ENCODE measurements at regions of chr20 and their contacts with region 1.

Region 1: DNA sequence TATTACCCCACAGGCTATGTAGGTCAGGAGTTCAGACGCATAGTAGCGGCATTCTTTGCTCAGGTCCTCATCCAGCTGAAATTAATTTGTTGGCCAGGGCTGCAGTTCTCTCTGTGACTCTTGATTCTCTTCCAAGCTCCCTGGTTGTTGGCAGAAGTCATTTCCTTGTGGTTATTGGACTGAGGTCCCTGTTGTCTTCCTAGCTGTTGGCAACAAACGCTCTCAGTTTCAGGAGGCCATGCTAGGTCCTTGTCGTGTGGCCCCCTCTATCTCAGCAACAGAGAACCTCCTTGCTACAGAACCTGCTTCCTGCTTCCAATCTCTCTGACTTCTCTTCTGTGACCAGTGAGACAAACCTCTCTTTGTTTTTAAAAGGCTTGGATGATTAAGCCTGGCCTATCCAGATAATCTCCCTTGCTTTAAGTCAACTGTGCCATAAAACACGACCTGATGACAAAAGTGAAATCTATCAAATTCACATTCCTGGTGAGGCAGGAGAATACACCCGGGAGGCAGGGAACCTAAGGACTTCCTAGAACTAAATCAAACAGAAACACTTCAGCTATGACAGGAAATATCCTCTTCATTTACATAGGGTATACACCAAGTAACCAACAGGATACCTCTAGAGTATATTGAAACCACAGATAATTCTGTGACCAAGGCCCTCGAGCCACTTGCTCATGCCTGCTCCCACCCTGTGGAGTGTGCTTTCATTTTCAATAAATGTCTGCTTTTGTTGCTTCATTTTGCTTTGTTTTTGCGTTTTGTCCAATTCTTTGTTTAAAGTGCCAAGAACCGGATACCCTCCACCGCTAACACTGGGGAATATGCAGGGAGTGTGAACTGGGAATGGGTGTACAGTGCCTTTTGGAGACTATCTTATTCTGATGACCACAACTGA is 196.0 kb downstream of the BTBD3 start:
- DNase-seq: peak in 2 of 10 donors; percentile 31 to 72
- H3K4me3 ChIP-seq: peak overlapping the region in 3 of 59 donors; percentile 9 to 21 (median 18)
- H3K27ac ChIP-seq: peak overlapping the region in 14 of 59 donors; percentile 26 to 66 (median 36)
- H3K27me3 ChIP-seq: no peaks in the 10 kb centered on the region
- CTCF ChIP-seq: peak in 4 of 56 donors; percentile 11 to 30 (median 14)

Region 2: DNA sequence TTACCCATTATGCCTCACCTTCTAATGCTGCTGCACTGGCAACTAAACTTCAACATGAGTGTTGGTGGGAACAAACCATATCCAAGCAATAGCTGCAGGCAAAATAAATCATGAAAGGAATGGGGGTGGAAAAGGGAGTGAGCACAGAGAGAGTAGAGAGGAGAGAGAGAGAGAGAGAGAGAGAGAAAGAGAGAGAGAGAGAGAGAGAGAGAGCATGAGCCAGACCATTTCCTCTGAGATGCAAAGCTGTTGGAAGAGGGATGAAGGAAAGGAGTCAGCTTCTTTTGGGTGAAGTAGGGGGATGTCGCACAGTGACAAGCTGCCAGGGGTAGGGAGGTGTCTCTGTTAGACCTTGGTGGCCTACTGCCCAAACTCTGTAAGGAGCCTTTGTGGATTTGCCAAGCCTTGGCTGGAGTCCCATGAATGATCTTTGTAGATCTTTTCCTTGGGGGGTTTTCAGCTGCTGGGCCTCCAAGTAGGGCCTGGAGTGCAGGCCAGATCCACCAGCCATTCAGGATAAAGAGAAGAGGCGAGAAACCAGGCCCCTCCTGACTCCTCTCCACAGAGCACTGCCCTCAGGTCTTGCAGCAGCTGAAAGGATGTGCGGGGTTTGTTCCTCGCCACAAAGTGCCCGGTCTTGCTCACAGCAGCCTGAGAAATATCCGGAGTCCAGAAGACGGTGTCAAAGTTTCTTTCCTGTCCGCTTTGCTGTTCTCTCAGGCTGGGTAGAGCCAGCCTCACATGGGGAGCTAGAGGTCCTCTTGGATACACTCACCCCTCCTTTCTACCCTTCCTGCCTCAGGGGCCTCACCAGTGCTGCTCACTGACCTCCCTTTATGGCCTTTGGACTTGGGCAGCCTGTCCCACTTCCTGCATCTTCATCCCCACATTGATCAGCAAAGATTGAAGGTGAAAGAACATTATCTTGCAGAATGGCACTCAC is 178.2 kb before region 1 on chr20:
- intact Hi-C with region 1: loop called in 1 of 2 experiments (anchors 10 kb)
- DNase-seq: no peak
- H3K4me3 ChIP-seq: no peak overlapping the region
- H3K27ac ChIP-seq: peak overlapping the region in 17 of 59 donors; percentile 1 to 50 (median 23)
- H3K27me3 ChIP-seq: no peaks in the 10 kb centered on the region
- CTCF ChIP-seq: no peak

Region 3: GRCh38 chr20:12053353-12053752 is 60.4 kb before region 1 on chr20:
- intact Hi-C with region 1: no loop called
- DNase-seq: no peak
- H3K4me3 ChIP-seq: no peak overlapping the region
- H3K27ac ChIP-seq: peak overlapping the region in 8 of 59 donors; percentile 6 to 83 (median 19)
- H3K27me3 ChIP-seq: no peaks in the 10 kb centered on the region
- CTCF ChIP-seq: no peak